GM13976 (cell line): ENCODE measurements at regions of chr1 and their contacts with region 1.

Region 1: GRCh38 chr1:145996433-145997015 is at the start of gene TXNIP:
- DNase-seq: peak; percentile 96
- CTCF ChIP-seq: no peak

Region 2: GRCh38 chr1:145837656-145838055 is 158.9 kb before region 1 on chr1:
- in situ Hi-C with region 1: loop called (anchors 10 kb)
- DNase-seq: no peak
- CTCF ChIP-seq: no peak

Region 3: GRCh38 chr1:145891587-145892485 is 104.7 kb before region 1 on chr1:
- in situ Hi-C with region 1: loop called (anchors 10 kb)
- DNase-seq: peak; percentile 75
- CTCF ChIP-seq: peak; percentile 85

Region 4: GRCh38 chr1:146039846-146040199 is 43.3 kb after region 1 on chr1:
- in situ Hi-C with region 1: no loop called
- DNase-seq: no peak
- CTCF ChIP-seq: no peak